ENCODE measurements at regions of chr9 and their contacts with region 1.

Region 1: GRCh38 chr9:113056191-113057106 is at the start of gene ZFP37:
- DNase-seq: peak; percentile 84 to 86
- ATAC-seq: peak; percentile 97 to 99
- H3K4me3 ChIP-seq: peak within 1 kb of the TSS; percentile 84 to 89 (median 86)
- H3K27ac ChIP-seq: peak within 1 kb of the TSS; percentile 68 to 76 (median 73)
- H3K4me1 ChIP-seq: peaks cover 5 to 9% of the 10 kb centered on the region in 2 donors
- H3K27me3 ChIP-seq: peaks cover 5 to 32% (median 17%) of the 10 kb centered on the region in 3 donors
- CTCF ChIP-seq: no peak
- POLR2A ChIP-seq: peak; percentile 15 to 16
- total RNA-seq, gene ZFP37: 0.49 to 2.6 (median 1.7) TPM

Region 2: DNA sequence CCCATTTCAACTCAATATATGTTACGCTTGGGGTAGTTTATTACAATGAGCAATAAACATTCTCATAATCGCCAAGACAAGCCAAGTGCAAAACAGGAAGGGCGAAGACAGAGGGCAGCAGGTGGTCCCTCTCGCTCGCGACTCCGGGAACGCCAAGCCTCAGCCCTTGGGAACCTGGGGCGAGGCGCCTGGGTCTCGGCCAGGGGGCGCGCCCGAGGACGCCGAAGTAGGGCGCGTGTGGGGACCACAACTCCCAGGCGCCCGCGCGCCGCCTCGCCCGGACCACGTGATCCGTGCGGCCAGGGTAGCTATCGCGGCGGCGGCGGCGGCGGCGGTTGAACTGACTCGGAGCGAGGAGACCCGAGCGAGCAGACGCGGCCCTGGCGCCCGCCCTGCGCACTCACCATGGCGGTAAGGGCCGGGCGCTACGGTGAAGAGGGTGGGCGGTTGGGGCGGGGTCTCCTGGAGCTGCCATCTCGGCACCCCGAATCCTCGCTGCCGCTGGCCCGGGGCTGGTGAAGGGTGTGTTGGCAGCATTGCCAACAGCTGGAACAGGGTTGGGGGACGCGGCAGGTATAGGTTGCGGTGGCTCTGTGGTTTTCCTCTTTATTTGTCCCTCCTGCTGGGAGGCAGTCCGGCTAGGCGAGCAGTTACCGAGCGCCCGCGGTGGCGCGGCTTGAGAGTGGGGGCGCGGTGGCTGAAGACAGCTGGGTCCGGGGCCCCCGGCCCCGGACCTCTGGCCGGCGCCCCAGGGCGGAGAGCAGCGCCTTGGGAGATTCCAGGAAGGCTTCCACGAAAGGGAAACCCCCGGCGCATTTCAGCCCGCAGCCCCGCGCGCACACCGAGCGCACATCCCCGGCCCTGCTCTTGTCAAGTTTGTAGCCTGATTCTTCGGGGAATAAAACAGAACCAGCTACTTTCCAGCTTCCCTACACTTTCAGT is 94.5 kb after region 1 on chr9 and contains the start of gene SLC31A2:
- in situ Hi-C with region 1: no loop called
- intact Hi-C with region 1: loop called (anchors 10 kb)
- DNase-seq: peak; percentile 81 to 86
- ATAC-seq: peak; percentile 81 to 82
- H3K4me3 ChIP-seq: peak within 1 kb of the TSS; percentile 95 to 99 (median 96)
- H3K27ac ChIP-seq: peak within 1 kb of the TSS; percentile 84 to 94 (median 92)
- H3K4me1 ChIP-seq: peaks cover 18 to 42% of the 10 kb centered on the region in 2 donors
- H3K27me3 ChIP-seq: no peaks in the 10 kb centered on the region
- CTCF ChIP-seq: peak in 3 of 5 experiments; percentile 23 to 32 (median 28)
- POLR2A ChIP-seq: peak; percentile 70 to 80
- total RNA-seq, gene SLC31A2: 17.5 to 29.6 (median 23.9) TPM

Region 3: GRCh38 chr9:113221003-113221799 is 164.8 kb after region 1 on chr9 and contains the starts of genes FKBP15 and SLC31A1:
- in situ Hi-C with region 1: no loop called
- intact Hi-C with region 1: loop called (anchors 10 kb)
- DNase-seq: peak; percentile 96 to 98
- ATAC-seq: peak; percentile 99
- H3K4me3 ChIP-seq: peak within 1 kb of the TSS; percentile 80 to 97 (median 88)
- H3K27ac ChIP-seq: peak within 1 kb of the TSS; percentile 92 to 97 (median 94)
- H3K4me1 ChIP-seq: peaks cover 32 to 36% of the 10 kb centered on the region in 2 donors
- H3K27me3 ChIP-seq: no peaks in the 10 kb centered on the region
- CTCF ChIP-seq: no peak
- POLR2A ChIP-seq: peak; percentile 75 to 81
- total RNA-seq, gene FKBP15: 13.3 to 17.5 (median 14.5) TPM
- total RNA-seq, gene SLC31A1: 2.9 to 5.6 (median 4.3) TPM

Region 4: DNA sequence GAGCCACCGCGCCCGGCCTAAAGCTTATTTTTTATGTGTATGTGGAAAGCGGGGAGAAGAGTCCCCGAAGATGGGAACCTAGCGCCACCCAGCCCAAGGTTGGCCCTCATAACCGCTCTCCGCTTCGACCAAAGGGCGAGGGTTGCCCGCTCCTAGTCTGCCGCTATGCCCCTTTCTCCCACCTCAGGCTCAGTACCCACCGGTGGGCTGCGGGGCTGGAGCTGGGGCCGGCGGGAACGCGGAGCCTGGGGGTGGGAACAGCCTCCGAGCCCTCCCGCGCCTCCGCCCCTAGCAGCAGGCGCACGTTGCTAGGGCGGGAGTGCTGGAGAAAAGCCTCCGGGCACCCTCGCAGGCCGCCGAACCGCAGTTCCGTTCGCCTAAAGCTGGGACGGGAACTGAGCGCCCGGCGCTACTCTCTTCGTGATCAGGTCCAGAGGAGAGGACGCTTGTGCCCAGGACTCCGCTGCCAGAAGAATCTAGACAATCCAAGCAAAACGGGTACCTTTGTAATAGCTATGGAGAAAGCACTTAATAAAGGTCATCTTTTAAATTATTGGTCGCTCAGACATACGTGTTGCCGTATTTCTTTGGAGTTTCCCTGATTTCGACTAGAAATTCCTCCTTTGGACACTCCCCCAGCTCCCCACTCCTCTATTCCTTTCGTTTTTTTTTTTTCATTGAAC is 283.7 kb after region 1 on chr9 and contains the start of gene WDR31:
- in situ Hi-C with region 1: no loop called
- intact Hi-C with region 1: loop called (anchors 10 kb)
- DNase-seq: peak; percentile 68 to 76
- ATAC-seq: peak; percentile 95 to 97
- H3K4me3 ChIP-seq: peak within 1 kb of the TSS; percentile 67 to 96 (median 87)
- H3K27ac ChIP-seq: peak within 1 kb of the TSS; percentile 60 to 77 (median 70)
- H3K4me1 ChIP-seq: peaks cover 9 to 20% of the 10 kb centered on the region in 2 donors
- H3K27me3 ChIP-seq: no peaks in the 10 kb centered on the region
- CTCF ChIP-seq: no peak
- POLR2A ChIP-seq: peak in 1 of 2 donors; percentile 26
- total RNA-seq, gene WDR31: 0.29 to 1.1 (median 0.36) TPM in 3 of 4 donors, not detected in the other